Dorsolateral prefrontal cortex (tissue), 120 donors: ENCODE measurements at regions of chr4 and their contacts with region 1.

Region 1: DNA sequence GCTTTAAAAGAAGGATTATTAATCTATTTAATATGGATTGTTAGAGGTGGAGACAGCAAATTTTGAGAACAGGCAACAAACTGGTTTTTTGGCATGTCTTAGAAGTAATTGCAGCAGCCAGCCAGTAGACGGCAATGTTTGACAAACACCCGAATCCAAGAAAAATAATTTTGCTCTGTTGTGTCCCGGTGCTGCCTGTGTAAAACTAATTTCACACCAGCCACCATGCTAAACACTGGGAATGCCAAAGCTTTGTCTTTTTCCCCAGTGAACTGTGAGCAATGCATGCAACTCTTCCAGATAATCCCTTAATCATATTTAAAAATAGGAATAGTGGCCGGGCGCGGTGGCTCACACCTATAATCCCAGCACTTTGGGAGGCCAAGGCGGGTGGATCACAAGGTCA is 25.9 kb downstream of the SMIM31 start:
- DNase-seq: peak in 1 of 10 donors; percentile 43
- H3K4me3 ChIP-seq: no peak overlapping the region
- H3K27ac ChIP-seq: no peak overlapping the region
- H3K27me3 ChIP-seq: no peaks in the 10 kb centered on the region
- CTCF ChIP-seq: peak; percentile 44 to 86 (median 74)

Region 2: GRCh38 chr4:164949448-164950143 is 169.8 kb after region 1 on chr4:
- intact Hi-C with region 1: loop called in 1 of 2 experiments (anchors 10 kb)
- DNase-seq: no peak
- H3K4me3 ChIP-seq: no peak overlapping the region
- H3K27ac ChIP-seq: no peak overlapping the region
- H3K27me3 ChIP-seq: peaks cover 0 to 12% (median 0%) of the 10 kb centered on the region in 45 donors
- CTCF ChIP-seq: peak in 8 of 56 donors; percentile 9 to 16 (median 13)

Region 3: GRCh38 chr4:165060942-165061341 is 281.1 kb after region 1 on chr4:
- intact Hi-C with region 1: loop called in 1 of 2 experiments (anchors 10 kb)
- DNase-seq: no peak
- H3K4me3 ChIP-seq: no peak overlapping the region
- H3K27ac ChIP-seq: no peak overlapping the region
- H3K27me3 ChIP-seq: no peaks in the 10 kb centered on the region
- CTCF ChIP-seq: peak in 55 of 56 donors; percentile 18 to 65 (median 48)

Region 4: DNA sequence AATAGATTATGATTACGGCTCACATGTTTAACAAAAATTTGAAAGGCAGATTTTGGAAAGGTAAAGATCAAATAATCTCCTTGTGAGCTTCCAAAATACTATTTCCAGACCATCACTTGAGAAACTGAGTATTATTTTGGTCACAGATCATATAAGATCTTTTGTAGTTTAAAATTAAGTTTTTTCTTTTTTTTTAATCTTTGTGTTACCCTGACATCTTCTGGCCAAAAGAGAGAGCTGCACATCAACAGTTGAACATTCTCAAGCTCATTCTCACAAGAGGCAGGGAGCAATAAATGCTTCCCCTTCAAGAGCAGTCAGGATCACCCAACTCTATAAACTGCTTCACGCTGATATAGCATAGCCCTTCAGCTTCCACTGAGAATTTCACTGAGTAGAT is 317.0 kb after region 1 on chr4:
- intact Hi-C with region 1: loop called (anchors 2 to 10 kb)
- DNase-seq: no peak
- H3K4me3 ChIP-seq: no peak overlapping the region
- H3K27ac ChIP-seq: no peak overlapping the region
- H3K27me3 ChIP-seq: no peaks in the 10 kb centered on the region
- CTCF ChIP-seq: peak in 55 of 56 donors; percentile 28 to 77 (median 62)